ENCODE measurements at regions of chr12 and their contacts with region 1.

Region 1: GRCh38 chr12:95506707-95507523 is 33.0 kb downstream of the METAP2 start:
- DNase-seq: no peak
- ATAC-seq: no peak
- H3K4me3 ChIP-seq: no peak overlapping the region
- H3K4me3 Mint-ChIP-seq: no peak overlapping the region
- H3K27ac ChIP-seq: no peak overlapping the region
- H3K27ac Mint-ChIP-seq: no peak overlapping the region
- H3K4me1 ChIP-seq: no peaks in the 10 kb centered on the region
- H3K4me1 Mint-ChIP-seq: peaks cover 14 to 20% (median 16%) of the 10 kb centered on the region in 3 donors
- H3K27me3 ChIP-seq: no peaks in the 10 kb centered on the region
- H3K27me3 Mint-ChIP-seq: no peaks in the 10 kb centered on the region

Region 2: GRCh38 chr12:94012590-94012989 is 1494.3 kb before region 1 on chr12:
- CTCF ChIA-PET with region 1: no interaction called
- POLR2A ChIA-PET with region 1: interaction called in 1 of 2 experiments, 12 read pairs
- DNase-seq: no peak
- ATAC-seq: no peak
- H3K4me3 ChIP-seq: no peak overlapping the region
- H3K4me3 Mint-ChIP-seq: no peak overlapping the region
- H3K27ac ChIP-seq: no peak overlapping the region
- H3K27ac Mint-ChIP-seq: peak overlapping the region in 1 of 2 donors; percentile 28
- H3K4me1 ChIP-seq: peaks cover 3 to 7% of the 10 kb centered on the region in 2 experiments
- H3K4me1 Mint-ChIP-seq: peaks cover 16 to 31% (median 29%) of the 10 kb centered on the region in 3 donors
- H3K27me3 ChIP-seq: peaks cover 0 to 3% of the 10 kb centered on the region in 2 experiments
- H3K27me3 Mint-ChIP-seq: no peaks in the 10 kb centered on the region